ENCODE measurements at regions of chr1 and their contacts with region 1.

Region 1: GRCh38 chr1:231040019-231040799 is at the start of gene FAM89A:
- DNase-seq: peak; percentile 56 to 81 (median 72)
- H3K4me3 ChIP-seq: peak within 1 kb of the TSS; percentile 27 to 99 (median 48)
- H3K27ac ChIP-seq: peak within 1 kb of the TSS in 3 of 5 donors; percentile 70 to 88 (median 74)
- H3K4me1 ChIP-seq: peaks cover 15 to 31% of the 10 kb centered on the region in 2 donors
- H3K27me3 ChIP-seq: no peaks in the 10 kb centered on the region
- CTCF ChIP-seq: no peak
- POLR2A ChIP-seq: peak in 1 of 2 donors; percentile 53
- total RNA-seq, gene FAM89A: 24.4 to 59.4 (median 36.6) TPM

Region 2: GRCh38 chr1:230922620-230923019 is 117.6 kb before region 1 on chr1:
- intact Hi-C with region 1: loop called in 1 of 2 experiments (anchors 5 kb)
- DNase-seq: no peak
- H3K4me3 ChIP-seq: no peak overlapping the region
- H3K27ac ChIP-seq: no peak overlapping the region
- H3K4me1 ChIP-seq: no peaks in the 10 kb centered on the region
- H3K27me3 ChIP-seq: no peaks in the 10 kb centered on the region
- CTCF ChIP-seq: no peak
- POLR2A ChIP-seq: no peak

Region 3: DNA sequence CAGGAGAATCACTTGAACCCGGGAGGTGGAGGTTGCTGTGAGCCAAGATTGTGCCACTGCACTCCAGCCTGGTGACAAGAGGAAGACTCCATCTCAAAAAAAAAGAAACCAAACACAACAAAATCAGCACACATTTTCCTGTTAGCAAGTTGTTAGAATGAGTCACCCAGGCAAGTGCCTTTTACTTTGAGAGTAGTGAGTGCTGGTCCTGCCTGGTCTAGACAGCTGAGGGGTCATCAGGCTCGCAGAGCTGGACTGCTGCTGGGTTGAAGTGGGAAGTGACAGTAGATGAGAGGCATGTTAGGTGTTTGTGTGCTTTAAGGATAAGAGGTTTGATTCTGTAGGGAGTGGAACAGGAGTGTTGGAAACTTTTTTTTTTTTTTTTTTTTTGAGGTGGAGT is 232.7 kb after region 1 on chr1:
- intact Hi-C with region 1: no loop called
- DNase-seq: no peak
- H3K4me3 ChIP-seq: no peak overlapping the region
- H3K27ac ChIP-seq: no peak overlapping the region
- H3K4me1 ChIP-seq: no peaks in the 10 kb centered on the region
- H3K27me3 ChIP-seq: no peaks in the 10 kb centered on the region
- CTCF ChIP-seq: no peak
- POLR2A ChIP-seq: no peak

Measured in adrenal gland (tissue), 19 donors.